Activated T-helper 2 cell treated with anti-CD3 and anti-CD28 coated beads, Interferon-gamma antibody, Interleukin-2, Interleukin-4, amounts not matched to agents 10 μg/mL and 5 μg/mL and 100 μg/mL, durations not matched to agents 14 hours and 24 hours and 36 hours (primary cell): ENCODE measurements at regions of chr12 and their contacts with region 1.

Region 1: GRCh38 chr12:108562348-108563135 is at the start of gene ISCU:
- DNase-seq: peak; percentile 98
- H3K4me3 Mint-ChIP-seq: peak within 1 kb of the TSS; percentile 100
- H3K27ac Mint-ChIP-seq: peak within 1 kb of the TSS; percentile 100
- H3K4me1 Mint-ChIP-seq: peaks cover 23% of the 10 kb centered on the region
- H3K27me3 Mint-ChIP-seq: no peaks in the 10 kb centered on the region
- total RNA-seq, gene ISCU: 62.9 and 63.5 TPM in 2 replicates

Region 2: DNA sequence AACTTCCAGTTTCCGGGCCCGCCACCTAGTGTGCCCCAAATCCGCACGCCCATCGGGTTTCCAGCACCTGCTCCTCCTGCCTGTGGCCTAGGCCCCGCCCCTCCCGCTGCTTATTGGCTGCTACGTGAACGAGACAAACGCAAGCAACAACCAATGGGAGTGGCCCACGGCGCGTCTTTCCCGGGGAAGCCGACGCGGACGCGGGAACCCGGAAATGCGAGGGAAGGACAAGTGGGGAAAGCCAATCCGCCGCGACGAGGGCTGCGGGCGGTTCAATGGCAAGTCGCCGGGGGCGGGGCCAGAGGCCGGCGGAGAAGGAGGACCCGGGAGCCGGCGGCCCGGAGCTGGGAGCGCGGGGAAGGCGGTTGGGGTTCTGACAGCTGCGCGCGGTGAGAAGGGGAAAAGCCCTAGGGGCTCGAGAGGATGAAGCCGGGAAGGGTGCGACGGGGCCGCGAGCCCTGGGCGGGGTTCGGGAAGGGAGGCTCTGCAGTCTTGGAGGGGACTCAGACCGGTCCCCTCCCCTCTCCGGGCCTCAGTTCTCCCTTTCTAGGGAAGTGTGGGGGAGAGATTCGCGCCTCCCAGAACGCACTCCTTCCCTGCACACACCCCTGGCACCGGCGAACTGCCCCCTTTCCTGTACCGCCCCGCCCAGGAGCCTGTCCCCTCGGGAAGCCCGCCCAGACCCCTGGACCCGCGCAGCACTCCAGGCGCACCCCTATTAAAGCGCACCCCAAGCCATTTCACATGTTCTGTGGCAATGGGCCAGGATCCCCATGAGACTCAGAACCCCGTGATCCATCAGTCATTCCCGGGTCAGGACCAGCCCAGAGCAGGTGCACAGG is 47.3 kb before region 1 on chr12 and contains the start of gene FICD:
- intact Hi-C with region 1: loop called (anchors 1 kb)
- DNase-seq: peak; percentile 99
- H3K4me3 Mint-ChIP-seq: peak within 1 kb of the TSS; percentile 86
- H3K27ac Mint-ChIP-seq: peak within 1 kb of the TSS; percentile 78
- H3K4me1 Mint-ChIP-seq: peaks cover 27% of the 10 kb centered on the region
- H3K27me3 Mint-ChIP-seq: no peaks in the 10 kb centered on the region
- total RNA-seq, gene FICD: 5.8 and 7.1 TPM in 2 replicates

Region 3: DNA sequence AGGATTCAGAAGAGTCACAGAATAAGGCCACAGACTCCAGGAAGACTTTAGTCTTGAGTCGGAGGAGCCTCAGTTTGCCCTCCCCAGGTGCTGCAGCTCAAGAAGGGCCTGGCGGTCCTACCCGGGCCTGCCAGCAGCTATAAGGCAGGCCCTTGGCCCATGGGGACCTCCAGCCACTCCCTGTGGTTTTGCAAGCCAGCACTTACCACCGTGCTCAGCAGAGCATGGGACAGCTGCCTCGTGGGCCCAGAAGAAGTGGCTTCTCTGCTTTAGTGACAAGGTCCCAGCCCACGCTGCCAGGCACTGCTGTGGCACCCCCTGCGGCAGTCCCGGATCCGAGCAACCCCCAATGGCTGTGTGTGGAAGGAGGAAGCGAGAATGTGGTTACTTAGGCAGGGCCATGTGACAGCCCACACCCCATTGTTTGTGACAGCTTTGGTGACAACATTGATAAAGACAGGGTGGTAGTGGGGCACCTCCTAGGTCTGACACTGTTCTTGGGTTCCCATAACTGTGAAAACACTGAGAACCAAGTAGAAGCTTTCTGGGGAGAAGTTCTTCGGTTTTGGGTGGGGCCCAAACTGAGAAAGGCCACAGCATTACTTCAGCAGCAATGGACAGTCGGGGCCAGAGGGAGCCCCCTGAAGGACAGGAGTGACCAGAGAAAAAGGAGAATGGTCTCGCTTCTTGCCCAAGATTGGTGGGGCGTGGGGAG is 71.1 kb after region 1 on chr12 and contains the start of gene SELPLG:
- intact Hi-C with region 1: loop called (anchors 1 kb)
- DNase-seq: peak; percentile 83
- H3K4me3 Mint-ChIP-seq: peak within 1 kb of the TSS; percentile 98
- H3K27ac Mint-ChIP-seq: peak within 1 kb of the TSS; percentile 99
- H3K4me1 Mint-ChIP-seq: peaks cover 65% of the 10 kb centered on the region
- H3K27me3 Mint-ChIP-seq: no peaks in the 10 kb centered on the region
- total RNA-seq, gene SELPLG: 52.1 and 55.6 TPM in 2 replicates

Region 4: GRCh38 chr12:108649669-108650068 is 87.1 kb after region 1 on chr12:
- intact Hi-C with region 1: no loop called
- DNase-seq: no peak
- H3K4me3 Mint-ChIP-seq: no peak overlapping the region
- H3K27ac Mint-ChIP-seq: peak overlapping the region; percentile 73
- H3K4me1 Mint-ChIP-seq: peaks cover 49% of the 10 kb centered on the region
- H3K27me3 Mint-ChIP-seq: no peaks in the 10 kb centered on the region

Region 5: DNA sequence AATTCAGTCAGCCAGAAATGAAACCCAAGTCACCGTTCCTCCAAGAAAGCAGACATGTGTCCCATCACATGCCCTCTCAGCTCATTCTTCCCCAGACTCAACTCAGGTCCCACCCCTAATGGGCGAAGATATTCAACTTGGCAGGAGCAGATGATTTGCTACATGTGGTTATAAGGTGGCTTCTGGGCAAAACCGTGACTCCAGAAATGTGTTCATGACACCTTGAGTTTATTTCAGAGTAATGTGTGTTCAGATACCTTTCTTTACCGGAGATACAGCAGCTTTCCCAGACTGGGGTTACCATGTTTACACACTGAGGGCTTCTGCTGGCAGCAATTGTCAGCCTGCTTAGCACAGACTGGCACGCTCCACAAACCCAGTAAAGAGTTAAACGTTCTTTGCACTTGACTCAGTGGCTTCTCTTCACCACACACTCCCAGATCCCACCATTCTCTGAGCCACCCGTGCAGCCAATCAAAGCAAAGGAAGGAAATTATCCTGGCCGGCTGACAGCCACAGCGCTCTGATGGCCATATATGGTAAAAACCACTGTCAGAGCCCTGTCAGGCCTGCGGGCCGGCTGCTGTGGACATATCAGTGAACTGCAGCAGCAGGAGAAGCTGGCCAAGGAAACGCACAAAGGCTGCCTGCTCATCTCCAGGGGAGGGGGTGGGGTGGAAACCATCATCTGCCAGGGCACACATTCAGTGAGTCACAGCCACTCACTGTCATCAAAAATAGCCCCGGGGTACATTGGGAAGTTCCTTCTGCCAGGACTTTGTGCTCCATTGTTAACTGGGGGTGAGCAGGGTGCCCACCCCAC is 128.8 kb after region 1 on chr12:
- intact Hi-C with region 1: loop called (anchors 2 kb)
- DNase-seq: peak; percentile 55
- H3K4me3 Mint-ChIP-seq: peak overlapping the region; percentile 62
- H3K27ac Mint-ChIP-seq: peak overlapping the region; percentile 99
- H3K4me1 Mint-ChIP-seq: peaks cover 64% of the 10 kb centered on the region
- H3K27me3 Mint-ChIP-seq: no peaks in the 10 kb centered on the region

Region 6: DNA sequence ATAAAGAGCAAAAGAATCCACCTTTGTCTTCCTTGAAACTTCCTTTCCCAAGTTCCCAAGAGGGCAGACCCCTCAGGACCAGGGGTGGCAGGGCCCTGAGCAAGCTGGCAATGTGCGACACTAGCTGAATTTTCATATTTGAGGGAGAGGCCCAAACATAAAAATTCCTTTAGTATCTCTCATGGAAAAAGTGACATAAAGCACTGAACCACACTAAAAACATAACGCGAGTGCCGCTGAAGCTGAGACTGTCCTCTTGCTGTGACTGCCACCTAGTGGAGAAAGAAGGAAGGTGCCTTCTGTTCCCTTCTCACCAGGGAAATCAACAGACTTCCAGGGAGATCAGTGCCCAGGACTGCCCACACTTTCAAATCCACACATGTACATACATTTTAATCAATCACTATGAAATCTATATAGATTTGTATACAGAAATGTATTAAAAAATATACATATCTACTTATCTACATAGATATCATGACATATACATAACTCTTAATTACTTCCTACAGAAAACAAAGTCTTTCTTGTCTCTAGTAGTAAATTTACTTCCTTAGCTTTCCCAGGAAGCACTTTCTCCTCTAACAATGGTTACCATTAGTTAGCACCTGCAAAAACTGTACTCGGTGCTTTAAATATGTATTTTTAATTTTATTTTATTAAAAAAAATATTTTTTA is 241.0 kb after region 1 on chr12:
- intact Hi-C with region 1: loop called (anchors 1 kb)
- DNase-seq: peak; percentile 50
- H3K4me3 Mint-ChIP-seq: no peak overlapping the region
- H3K27ac Mint-ChIP-seq: peak overlapping the region; percentile 60
- H3K4me1 Mint-ChIP-seq: peaks cover 9% of the 10 kb centered on the region
- H3K27me3 Mint-ChIP-seq: no peaks in the 10 kb centered on the region

Region 7: DNA sequence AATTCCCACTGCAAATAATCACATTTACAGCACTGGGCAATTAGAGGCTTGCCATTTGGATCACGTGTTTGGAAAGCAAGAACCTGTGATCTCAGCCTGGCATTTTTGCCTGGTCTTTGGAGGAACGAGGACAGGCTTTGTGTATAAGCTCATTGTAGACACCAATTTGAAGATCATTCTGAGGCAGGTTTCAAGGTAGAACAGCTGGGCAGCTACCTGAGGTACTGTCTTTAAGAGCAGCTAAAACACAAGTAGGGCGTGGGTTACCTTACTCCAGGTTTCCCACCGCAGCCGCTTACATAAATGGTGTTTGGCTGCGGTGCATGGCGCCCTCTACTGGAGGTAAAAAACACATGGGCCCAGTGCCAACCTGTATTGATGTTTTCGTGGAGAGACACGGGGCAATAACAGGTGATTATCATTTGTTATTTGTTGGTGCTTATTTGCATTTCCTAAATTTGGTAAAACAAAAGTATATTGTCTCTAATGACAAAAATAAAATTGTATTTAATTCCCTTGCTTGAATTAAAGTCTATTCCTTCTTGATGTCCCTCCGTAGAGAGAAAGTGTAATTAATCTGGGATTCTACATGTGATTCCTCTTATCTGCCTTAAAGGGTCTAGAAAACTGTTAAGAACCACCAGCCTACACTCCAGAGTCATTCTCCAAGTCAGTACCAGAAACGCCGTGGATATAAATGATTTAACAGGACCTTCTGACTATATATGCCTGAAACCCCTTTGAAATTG is 388.6 kb after region 1 on chr12:
- intact Hi-C with region 1: loop called (anchors 1 kb)
- DNase-seq: peak; percentile 52
- H3K4me3 Mint-ChIP-seq: no peak overlapping the region
- H3K27ac Mint-ChIP-seq: no peak overlapping the region
- H3K4me1 Mint-ChIP-seq: no peaks in the 10 kb centered on the region
- H3K27me3 Mint-ChIP-seq: peaks cover 14% of the 10 kb centered on the region

Region 8: GRCh38 chr12:109093022-109093918 is 530.7 kb after region 1 on chr12 and contains the start of gene ALKBH2:
- intact Hi-C with region 1: loop called (anchors 1 kb)
- DNase-seq: peak; percentile 90
- H3K4me3 Mint-ChIP-seq: peak within 1 kb of the TSS; percentile 77
- H3K27ac Mint-ChIP-seq: peak within 1 kb of the TSS; percentile 71
- H3K4me1 Mint-ChIP-seq: peaks cover 33% of the 10 kb centered on the region
- H3K27me3 Mint-ChIP-seq: no peaks in the 10 kb centered on the region
- total RNA-seq, gene ALKBH2: 33.4 and 34.9 TPM in 2 replicates